ENCODE measurements at regions of chr7 and their contacts with region 1.

Region 1: DNA sequence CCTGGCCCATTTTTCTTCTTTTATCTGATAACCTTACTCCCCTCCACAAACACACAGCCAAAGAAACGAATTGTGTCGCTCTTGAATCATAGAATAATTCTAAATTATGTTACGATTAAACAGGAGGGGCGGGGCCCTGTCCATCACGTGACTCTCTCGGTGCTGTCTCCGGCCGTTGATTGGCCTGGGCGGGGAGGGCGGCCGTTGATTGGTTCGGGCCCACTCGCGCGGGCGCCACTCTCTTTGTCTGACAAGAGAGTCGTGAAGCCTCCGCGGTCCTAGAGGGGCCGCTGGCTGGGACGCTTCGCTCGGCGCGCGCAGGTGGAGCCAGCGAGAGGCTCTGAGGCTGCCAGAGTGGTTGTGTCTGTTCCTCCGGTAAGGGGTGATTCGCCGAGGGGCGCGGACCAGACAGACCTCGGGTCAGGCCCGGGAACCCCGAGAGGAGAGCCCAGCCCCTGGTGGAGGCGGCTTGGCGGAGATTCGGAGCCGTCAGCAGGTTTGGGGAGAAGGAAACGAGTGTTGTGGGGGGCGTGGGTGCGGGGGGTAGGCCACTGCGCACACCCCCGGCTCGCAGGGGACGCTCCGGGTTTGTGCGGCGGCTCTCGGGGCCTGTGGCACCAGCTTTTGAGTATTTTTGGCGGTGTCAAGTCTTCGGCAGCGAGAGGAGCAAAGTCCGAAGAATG is at the start of gene ZNF789:
- DNase-seq: peak; percentile 90 to 98 (median 95)
- ATAC-seq: peak; percentile 99
- H3K4me3 ChIP-seq: peak within 1 kb of the TSS; percentile 86
- H3K4me3 Mint-ChIP-seq: peak within 1 kb of the TSS; percentile 94 to 99 (median 98)
- H3K27ac ChIP-seq: peak within 1 kb of the TSS; percentile 82
- H3K27ac Mint-ChIP-seq: peak within 1 kb of the TSS; percentile 87 to 98 (median 95)
- H3K4me1 ChIP-seq: peaks cover 8 to 15% of the 10 kb centered on the region in 2 donors
- H3K4me1 Mint-ChIP-seq: peaks cover 23 to 48% (median 35%) of the 10 kb centered on the region in 7 donors
- H3K27me3 ChIP-seq: no peaks in the 10 kb centered on the region
- H3K27me3 Mint-ChIP-seq: peaks cover 0 to 5% (median 0%) of the 10 kb centered on the region in 5 donors
- total RNA-seq, gene ZNF789: 17.4 to 28.0 (median 27.3) TPM

Region 2: GRCh38 chr7:98598846-98599615 is 873.7 kb before region 1 on chr7:
- CTCF ChIA-PET with region 1: no interaction called
- POLR2A ChIA-PET with region 1: no interaction called
- intact Hi-C with region 1: no loop called
- DNase-seq: no peak
- ATAC-seq: no peak
- H3K4me3 ChIP-seq: no peak overlapping the region
- H3K4me3 Mint-ChIP-seq: no peak overlapping the region
- H3K27ac ChIP-seq: no peak overlapping the region
- H3K27ac Mint-ChIP-seq: no peak overlapping the region
- H3K4me1 ChIP-seq: no peaks in the 10 kb centered on the region
- H3K4me1 Mint-ChIP-seq: no peaks in the 10 kb centered on the region
- H3K27me3 ChIP-seq: no peaks in the 10 kb centered on the region
- H3K27me3 Mint-ChIP-seq: peaks cover 0 to 24% (median 7%) of the 10 kb centered on the region in 5 donors

Region 3: DNA sequence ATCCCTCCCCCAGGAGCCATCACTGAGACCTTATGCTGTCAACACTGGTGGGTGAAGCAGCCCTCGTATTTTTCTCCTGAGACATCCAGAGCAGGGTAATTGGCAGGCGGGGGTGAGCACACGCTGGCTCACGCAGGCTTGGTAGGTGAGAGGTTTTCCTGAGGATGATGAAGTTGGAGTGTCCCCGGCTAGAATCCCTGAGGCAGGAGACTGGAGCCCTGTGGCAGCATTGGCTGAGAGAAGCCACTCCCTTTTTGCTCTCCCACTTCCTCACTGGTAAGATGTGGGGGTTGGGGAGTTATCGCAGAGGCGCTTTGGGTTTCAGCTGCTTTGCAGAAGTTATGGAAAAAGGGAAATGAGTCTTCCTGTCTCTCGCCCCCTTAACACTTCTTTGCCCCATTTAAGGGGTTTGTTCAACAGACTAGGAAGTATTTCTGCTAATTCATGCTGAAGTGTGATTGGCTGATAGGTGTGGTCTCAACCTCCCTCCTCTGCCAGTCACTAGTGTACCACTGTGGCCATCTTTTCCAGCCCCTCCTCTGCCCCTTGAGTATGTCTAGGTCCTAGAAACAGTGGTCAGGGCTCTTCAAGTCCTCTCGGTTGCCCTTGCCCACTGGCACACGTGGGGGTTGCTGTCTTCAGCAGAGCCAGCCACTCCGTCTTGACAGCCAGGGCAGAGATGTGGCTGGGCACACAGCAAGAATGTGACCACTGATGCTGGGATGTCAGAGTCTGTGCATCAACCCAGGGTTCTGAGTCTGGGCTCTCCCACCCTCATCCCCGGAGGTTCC is 92.5 kb before region 1 on chr7:
- CTCF ChIA-PET with region 1: no interaction called
- POLR2A ChIA-PET with region 1: interaction called, 3 read pairs
- intact Hi-C with region 1: loop called in 1 of 2 experiments (anchors 1 kb)
- DNase-seq: peak in 7 of 9 donors; percentile 21 to 37 (median 30)
- ATAC-seq: peak; percentile 15
- H3K4me3 ChIP-seq: peak overlapping the region; percentile 78
- H3K4me3 Mint-ChIP-seq: peak overlapping the region; percentile 78 to 91 (median 84)
- H3K27ac ChIP-seq: peak overlapping the region; percentile 96
- H3K27ac Mint-ChIP-seq: peak overlapping the region; percentile 87 to 99 (median 98)
- H3K4me1 ChIP-seq: peaks cover 44 to 68% of the 10 kb centered on the region in 2 donors
- H3K4me1 Mint-ChIP-seq: peaks cover 29 to 70% (median 60%) of the 10 kb centered on the region in 7 donors
- H3K27me3 ChIP-seq: no peaks in the 10 kb centered on the region
- H3K27me3 Mint-ChIP-seq: no peaks in the 10 kb centered on the region

Region 4: DNA sequence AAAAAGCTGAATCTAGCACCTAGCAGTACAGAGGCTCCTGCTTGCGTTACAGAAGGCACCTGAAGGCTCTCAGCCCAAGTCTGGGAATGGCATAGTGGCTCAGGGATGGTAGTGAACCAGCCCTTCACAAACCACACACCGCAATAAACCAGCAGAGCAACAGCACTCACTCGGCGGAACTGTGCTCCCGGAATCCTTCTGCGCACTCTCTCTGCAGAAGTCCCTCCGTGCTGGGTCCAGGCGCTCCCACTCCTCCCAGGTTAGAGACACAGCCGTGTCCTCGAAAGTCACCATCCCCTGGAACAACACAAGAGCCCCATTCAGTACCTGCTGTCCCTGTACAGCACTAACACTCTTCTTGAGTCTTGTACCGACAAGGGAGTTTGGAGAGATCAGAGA is 25.8 kb after region 1 on chr7:
- CTCF ChIA-PET with region 1: interaction called, 3 read pairs
- POLR2A ChIA-PET with region 1: interaction called, 18 read pairs
- intact Hi-C with region 1: loop called (anchors 1 kb)
- DNase-seq: no peak
- ATAC-seq: no peak
- H3K4me3 ChIP-seq: peak overlapping the region; percentile 99
- H3K4me3 Mint-ChIP-seq: peak overlapping the region; percentile 95 to 100 (median 98)
- H3K27ac ChIP-seq: peak overlapping the region; percentile 98
- H3K27ac Mint-ChIP-seq: peak overlapping the region; percentile 86 to 100 (median 98)
- H3K4me1 ChIP-seq: peaks cover 19 to 23% of the 10 kb centered on the region in 2 donors
- H3K4me1 Mint-ChIP-seq: peaks cover 14 to 41% (median 35%) of the 10 kb centered on the region in 7 donors
- H3K27me3 ChIP-seq: no peaks in the 10 kb centered on the region
- H3K27me3 Mint-ChIP-seq: no peaks in the 10 kb centered on the region

Region 5: GRCh38 chr7:99558306-99559174 is 85.8 kb after region 1 on chr7 and contains the start of gene ZNF655:
- CTCF ChIA-PET with region 1: no interaction called
- POLR2A ChIA-PET with region 1: interaction called, 7 read pairs
- intact Hi-C with region 1: loop called in 1 of 2 experiments (anchors 1 kb)
- DNase-seq: peak; percentile 85 to 96 (median 93)
- ATAC-seq: peak; percentile 89
- H3K4me3 ChIP-seq: peak within 1 kb of the TSS; percentile 85
- H3K4me3 Mint-ChIP-seq: peak within 1 kb of the TSS; percentile 94 to 100 (median 97)
- H3K27ac ChIP-seq: peak within 1 kb of the TSS; percentile 99
- H3K27ac Mint-ChIP-seq: peak within 1 kb of the TSS; percentile 95 to 100 (median 99)
- H3K4me1 ChIP-seq: peaks cover 24 to 25% of the 10 kb centered on the region in 2 donors
- H3K4me1 Mint-ChIP-seq: peaks cover 32 to 69% (median 51%) of the 10 kb centered on the region in 7 donors
- H3K27me3 ChIP-seq: no peaks in the 10 kb centered on the region
- H3K27me3 Mint-ChIP-seq: no peaks in the 10 kb centered on the region
- total RNA-seq, gene ZNF655: 110 to 165 (median 157) TPM

Region 6: DNA sequence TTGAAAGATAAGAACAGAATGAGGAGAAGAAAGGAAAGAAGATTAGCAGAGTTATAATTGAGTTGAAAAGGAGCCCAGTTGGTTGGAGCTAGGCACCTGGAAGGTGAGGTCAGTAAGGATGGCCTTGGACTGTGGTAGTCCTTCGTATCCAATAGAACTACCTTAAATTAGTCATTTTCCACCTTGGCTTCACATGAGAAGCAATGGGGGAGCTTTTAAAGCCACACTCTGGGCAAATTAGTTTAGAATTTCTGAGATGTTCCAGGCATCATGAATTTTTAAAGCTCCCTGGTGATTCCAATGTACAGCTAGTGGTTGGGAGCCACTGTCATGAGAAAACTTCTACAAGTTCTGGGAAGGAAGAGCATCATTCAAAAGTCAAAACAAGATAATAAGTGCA is 234.4 kb after region 1 on chr7:
- CTCF ChIA-PET with region 1: no interaction called
- POLR2A ChIA-PET with region 1: no interaction called
- intact Hi-C with region 1: no loop called
- DNase-seq: no peak
- ATAC-seq: no peak
- H3K4me3 ChIP-seq: no peak overlapping the region
- H3K4me3 Mint-ChIP-seq: no peak overlapping the region
- H3K27ac ChIP-seq: no peak overlapping the region
- H3K27ac Mint-ChIP-seq: no peak overlapping the region
- H3K4me1 ChIP-seq: no peaks in the 10 kb centered on the region
- H3K4me1 Mint-ChIP-seq: no peaks in the 10 kb centered on the region
- H3K27me3 ChIP-seq: no peaks in the 10 kb centered on the region
- H3K27me3 Mint-ChIP-seq: no peaks in the 10 kb centered on the region

Region 7: DNA sequence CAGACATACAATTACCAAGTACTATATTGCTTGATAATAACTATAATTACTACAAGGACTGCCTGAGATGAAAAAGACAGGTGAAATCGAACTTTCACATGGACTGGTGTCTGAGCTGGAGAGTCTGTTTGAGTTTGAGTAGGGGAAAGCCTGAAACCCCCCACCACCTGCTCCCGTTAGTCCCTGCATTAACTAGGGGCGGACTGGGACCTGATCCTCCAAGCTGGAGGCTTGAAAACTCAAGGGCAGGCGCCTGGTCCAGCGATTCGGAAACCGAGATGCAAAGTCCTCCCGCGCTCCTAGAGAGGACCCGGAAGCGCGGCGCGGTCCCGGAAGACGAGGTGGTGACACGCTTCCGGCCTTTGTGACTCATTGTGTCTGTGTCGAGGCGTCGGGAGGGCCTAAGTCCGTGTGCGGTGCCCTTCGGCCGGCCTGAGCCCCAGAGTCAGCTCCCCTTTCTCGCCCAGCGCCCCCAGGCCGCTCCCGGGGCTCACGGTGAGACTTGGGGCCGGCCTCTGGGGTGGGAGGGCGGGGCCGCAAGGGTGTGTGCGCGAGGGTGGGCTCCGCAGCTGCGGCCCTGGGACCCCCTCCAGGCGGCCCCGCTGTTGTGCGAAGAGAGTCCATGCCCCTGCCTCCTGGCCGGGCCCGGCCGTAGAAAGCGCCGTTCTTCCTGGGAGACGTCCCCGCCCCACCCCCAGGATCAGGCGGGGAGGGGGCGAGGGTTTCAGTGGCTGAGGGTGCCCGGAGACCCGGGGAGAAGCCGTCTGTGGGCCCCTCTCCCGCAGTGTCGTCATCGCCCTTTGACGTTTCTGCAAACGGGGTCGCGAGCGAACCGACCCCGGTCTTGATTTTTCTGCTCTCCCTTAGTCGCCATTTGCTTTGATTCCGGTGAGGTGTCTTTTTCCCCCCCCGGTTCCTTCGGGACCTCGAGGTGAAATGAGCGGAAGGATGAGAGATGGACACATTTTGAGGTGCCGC is 542.8 kb after region 1 on chr7 and contains the start of gene ZKSCAN1:
- CTCF ChIA-PET with region 1: no interaction called
- POLR2A ChIA-PET with region 1: no interaction called
- intact Hi-C with region 1: loop called in 1 of 2 experiments (anchors 1 kb)
- DNase-seq: peak; percentile 68 to 86 (median 81)
- ATAC-seq: peak; percentile 99
- H3K4me3 ChIP-seq: peak within 1 kb of the TSS; percentile 51
- H3K4me3 Mint-ChIP-seq: peak within 1 kb of the TSS; percentile 92 to 98 (median 96)
- H3K27ac ChIP-seq: peak within 1 kb of the TSS; percentile 98
- H3K27ac Mint-ChIP-seq: peak within 1 kb of the TSS; percentile 91 to 98 (median 97)
- H3K4me1 ChIP-seq: peaks cover 19 to 22% of the 10 kb centered on the region in 2 donors
- H3K4me1 Mint-ChIP-seq: peaks cover 23 to 57% (median 44%) of the 10 kb centered on the region in 7 donors
- H3K27me3 ChIP-seq: no peaks in the 10 kb centered on the region
- H3K27me3 Mint-ChIP-seq: peaks cover 0 to 3% (median 0%) of the 10 kb centered on the region in 5 donors
- total RNA-seq, gene ZKSCAN1: 54.0 to 103 (median 70.1) TPM

Measured in naive thymus-derived CD4-positive, alpha-beta T cell (primary cell).